H1 (cell line): ENCODE measurements at regions of chr12 and their contacts with region 1.

Region 1: DNA sequence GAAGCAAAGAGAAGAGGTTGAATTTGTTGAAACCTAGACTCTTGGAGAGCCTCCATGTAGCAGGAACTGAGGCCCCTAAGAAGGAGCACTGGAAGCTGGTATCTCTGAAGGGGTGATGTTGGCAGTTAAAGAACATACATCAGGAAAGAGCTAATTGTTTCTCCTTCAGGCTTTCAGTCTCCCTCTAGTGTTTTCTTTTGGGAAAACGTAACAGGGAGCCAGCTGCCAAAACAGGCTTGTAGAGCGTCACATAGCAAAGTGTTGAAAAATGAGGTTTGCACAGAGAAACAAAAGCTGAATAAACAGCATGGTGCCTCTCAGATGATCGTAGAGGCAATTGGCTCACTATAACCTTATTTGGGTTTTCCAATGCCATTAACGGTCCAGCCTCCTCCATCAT is 46.9 kb upstream of the CAND1 start:
- DNase-seq: no peak
- H3K4me3 ChIP-seq: no peak overlapping the region
- H3K27ac ChIP-seq: no peak overlapping the region
- H3K4me1 ChIP-seq: peaks cover 0 to 4% (median 2%) of the 10 kb centered on the region in 4 experiments; a peak in 3 of 7 replicates
- H3K27me3 ChIP-seq: no peaks in the 10 kb centered on the region
- CTCF ChIP-seq: peak in 2 of 3 experiments; percentile 40 to 66; a peak in 2 of 4 replicates
- EP300 ChIP-seq: no peak
- POLR2A ChIP-seq: no peak
- RAD21 ChIP-seq: peak; percentile 67 to 69

Region 2: DNA sequence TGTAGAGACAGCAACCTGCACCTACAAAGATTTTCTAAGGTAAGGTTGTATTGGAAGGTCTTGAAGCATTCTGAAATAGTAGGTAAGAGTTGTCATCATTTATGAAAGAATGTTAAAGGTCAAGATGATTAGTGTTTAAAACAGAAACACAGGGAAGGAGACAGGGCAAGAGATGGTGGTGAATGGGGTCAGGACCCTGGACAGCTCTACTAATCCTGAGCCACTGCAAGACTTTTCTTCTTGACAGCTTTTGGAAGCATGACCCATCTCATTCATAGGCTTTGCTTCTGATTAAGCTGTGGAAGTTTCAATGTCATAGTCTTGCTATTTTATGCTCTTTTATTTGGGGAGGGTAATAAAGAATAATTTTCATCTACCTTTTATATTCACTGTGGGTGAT is 28.6 kb before region 1 on chr12:
- CTCF ChIA-PET with region 1: interaction called, 11 read pairs
- POLR2A ChIA-PET with region 1: no interaction called
- DNase-seq: peak in 1 of 2 experiments; percentile 57
- H3K4me3 ChIP-seq: no peak overlapping the region
- H3K27ac ChIP-seq: no peak overlapping the region
- H3K4me1 ChIP-seq: no peaks in the 10 kb centered on the region
- H3K27me3 ChIP-seq: no peaks in the 10 kb centered on the region
- CTCF ChIP-seq: no peak
- EP300 ChIP-seq: no peak
- POLR2A ChIP-seq: no peak
- RAD21 ChIP-seq: no peak

Region 3: DNA sequence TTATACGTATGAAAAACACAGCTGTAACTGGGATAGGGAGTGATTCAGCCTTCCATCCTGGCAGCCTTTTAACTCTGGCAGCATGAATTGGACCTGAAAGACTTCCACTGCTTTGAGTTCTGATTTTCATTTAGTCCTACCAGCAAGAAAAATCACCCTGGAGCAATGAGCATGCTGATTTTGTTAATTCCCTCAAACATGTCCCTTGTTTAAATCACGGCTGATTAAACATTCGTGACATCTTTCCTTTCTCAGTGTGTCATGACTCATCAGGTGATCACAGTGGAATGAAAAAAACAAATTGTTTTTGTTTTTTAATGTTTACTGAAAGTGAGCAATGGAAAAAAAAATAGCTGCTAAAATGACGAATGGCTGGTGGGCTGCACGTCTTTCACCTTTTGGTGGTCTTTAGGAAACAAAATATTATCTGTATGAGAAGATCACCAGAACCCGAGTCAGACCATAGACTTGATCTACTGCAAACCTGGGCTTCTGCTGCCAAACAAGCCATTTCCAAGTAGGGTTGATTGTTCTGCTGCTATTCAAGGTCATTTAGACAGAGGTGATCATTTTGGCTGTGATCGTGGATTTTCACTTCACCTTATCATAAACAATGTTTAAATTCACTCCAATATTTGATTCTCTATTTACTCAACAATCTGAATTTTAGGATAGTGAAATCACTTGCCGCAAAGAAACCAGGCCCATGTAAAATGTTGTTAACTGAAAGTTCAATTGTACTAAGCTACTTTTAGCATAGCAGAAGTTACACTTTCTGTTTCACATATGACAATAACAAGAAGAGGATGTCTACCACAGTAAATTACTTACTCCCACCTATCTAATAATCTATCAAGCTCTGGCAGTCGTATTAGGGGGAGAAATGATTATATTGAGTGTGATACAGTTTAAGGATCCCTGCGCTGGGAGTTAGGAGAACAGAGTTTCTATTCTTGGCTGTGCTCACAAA is 20.0 kb before region 1 on chr12:
- CTCF ChIA-PET with region 1: interaction called, 25 read pairs
- POLR2A ChIA-PET with region 1: no interaction called
- DNase-seq: no peak
- H3K4me3 ChIP-seq: no peak overlapping the region
- H3K27ac ChIP-seq: no peak overlapping the region
- H3K4me1 ChIP-seq: no peaks in the 10 kb centered on the region
- H3K27me3 ChIP-seq: no peaks in the 10 kb centered on the region
- CTCF ChIP-seq: no peak
- EP300 ChIP-seq: no peak
- POLR2A ChIP-seq: no peak
- RAD21 ChIP-seq: no peak

Region 4: DNA sequence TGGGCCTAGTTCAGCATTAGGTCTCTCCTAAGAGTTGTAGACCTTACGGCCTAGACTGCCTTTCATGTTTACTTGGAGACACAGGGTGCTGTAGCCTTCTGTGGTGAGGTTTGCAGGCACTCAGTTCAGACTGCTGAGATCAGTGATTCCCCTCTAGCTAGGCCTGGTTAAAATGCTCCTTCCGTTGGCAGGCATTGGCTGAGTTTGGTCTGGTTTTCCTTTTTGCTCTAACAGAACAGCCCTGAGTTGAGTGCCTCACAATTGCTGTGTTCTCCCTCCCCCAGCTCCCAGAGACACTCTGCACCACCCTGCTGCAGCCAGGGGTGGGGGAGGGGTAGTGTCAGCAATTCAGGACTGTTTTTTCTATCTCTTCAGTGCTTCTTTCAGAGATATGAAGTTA is 247.4 kb after region 1 on chr12:
- CTCF ChIA-PET with region 1: no interaction called
- POLR2A ChIA-PET with region 1: no interaction called
- DNase-seq: no peak
- H3K4me3 ChIP-seq: no peak overlapping the region
- H3K27ac ChIP-seq: no peak overlapping the region
- H3K4me1 ChIP-seq: peaks cover 4 to 14% (median 8%) of the 10 kb centered on the region in 4 experiments
- H3K27me3 ChIP-seq: no peaks in the 10 kb centered on the region
- CTCF ChIP-seq: no peak
- EP300 ChIP-seq: no peak
- POLR2A ChIP-seq: no peak
- RAD21 ChIP-seq: peak in 1 of 2 experiments; percentile 16; a peak in 1 of 4 replicates